PC-9 (cell line): ENCODE measurements at regions of chr3 and their contacts with region 1.

Region 1: DNA sequence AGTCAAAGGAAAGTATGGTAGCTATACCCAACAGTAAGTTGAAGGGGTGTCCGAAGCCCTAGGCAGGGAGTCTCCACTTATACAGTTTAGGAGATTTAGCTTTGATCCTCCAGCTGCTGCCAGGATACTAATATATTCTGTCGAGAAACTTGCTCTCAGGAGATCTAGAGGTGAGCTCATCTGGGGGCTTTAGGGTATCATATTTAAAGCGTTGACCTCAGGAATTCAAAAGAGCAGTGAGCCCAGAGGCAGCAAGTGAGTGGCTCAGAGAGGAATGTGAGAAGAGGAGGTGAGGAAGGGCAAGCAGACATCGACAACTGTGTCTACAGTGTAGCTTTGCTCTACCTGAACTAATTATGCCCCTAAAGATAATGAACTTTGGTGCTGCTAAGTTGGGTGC is 245.1 kb upstream of the LRTM1 start:
- DNase-seq: no peak
- H3K4me3 ChIP-seq: no peak overlapping the region
- H3K27ac ChIP-seq: no peak overlapping the region
- H3K4me1 ChIP-seq: no peaks in the 10 kb centered on the region
- H3K27me3 ChIP-seq: no peaks in the 10 kb centered on the region
- CTCF ChIP-seq: no peak

Region 2: GRCh38 chr3:54481606-54482365 is 691.1 kb before region 1 on chr3:
- CTCF ChIA-PET with region 1: no interaction called
- POLR2A ChIA-PET with region 1: no interaction called
- intact Hi-C with region 1: no loop called
- DNase-seq: no peak
- H3K4me3 ChIP-seq: no peak overlapping the region
- H3K27ac ChIP-seq: no peak overlapping the region
- H3K4me1 ChIP-seq: no peaks in the 10 kb centered on the region
- H3K27me3 ChIP-seq: no peaks in the 10 kb centered on the region
- CTCF ChIP-seq: no peak

Region 3: GRCh38 chr3:54582424-54582823 is 590.5 kb before region 1 on chr3:
- CTCF ChIA-PET with region 1: no interaction called
- POLR2A ChIA-PET with region 1: no interaction called
- intact Hi-C with region 1: no loop called
- DNase-seq: no peak
- H3K4me3 ChIP-seq: no peak overlapping the region
- H3K27ac ChIP-seq: no peak overlapping the region
- H3K4me1 ChIP-seq: no peaks in the 10 kb centered on the region
- H3K27me3 ChIP-seq: 0 out of 2 replicates have a peak, but pooled peaks cover 21% of the 10 kb centered on the region
- CTCF ChIP-seq: no peak

Region 4: GRCh38 chr3:55500555-55501330 is 327.8 kb after region 1 on chr3:
- CTCF ChIA-PET with region 1: interaction called, 11 read pairs
- POLR2A ChIA-PET with region 1: no interaction called
- intact Hi-C with region 1: no loop called
- DNase-seq: no peak
- H3K4me3 ChIP-seq: no peak overlapping the region
- H3K27ac ChIP-seq: no peak overlapping the region
- H3K4me1 ChIP-seq: no peaks in the 10 kb centered on the region
- H3K27me3 ChIP-seq: no peaks in the 10 kb centered on the region
- CTCF ChIP-seq: no peak